CD4-positive, alpha-beta memory T cell (primary cell): ENCODE measurements at regions of chr10 and their contacts with region 1.

Region 1: GRCh38 chr10:133329491-133330202 is 7.0 kb downstream of the CALY start:
- DNase-seq: peak; percentile 77 to 84 (median 81)
- H3K4me3 ChIP-seq: no peak overlapping the region
- H3K4me3 Mint-ChIP-seq: peak overlapping the region in 5 of 8 donors; percentile 21 to 63 (median 32)
- H3K27ac ChIP-seq: no peak overlapping the region
- H3K27ac Mint-ChIP-seq: peak overlapping the region in 2 of 7 donors; percentile 35 to 79
- H3K4me1 ChIP-seq: peaks cover 24% of the 10 kb centered on the region
- H3K4me1 Mint-ChIP-seq: peaks cover 3 to 31% (median 12%) of the 10 kb centered on the region in 4 donors
- H3K27me3 ChIP-seq: peaks cover 31% of the 10 kb centered on the region
- H3K27me3 Mint-ChIP-seq: peaks cover 13 to 18% of the 10 kb centered on the region in 2 donors

Region 2: DNA sequence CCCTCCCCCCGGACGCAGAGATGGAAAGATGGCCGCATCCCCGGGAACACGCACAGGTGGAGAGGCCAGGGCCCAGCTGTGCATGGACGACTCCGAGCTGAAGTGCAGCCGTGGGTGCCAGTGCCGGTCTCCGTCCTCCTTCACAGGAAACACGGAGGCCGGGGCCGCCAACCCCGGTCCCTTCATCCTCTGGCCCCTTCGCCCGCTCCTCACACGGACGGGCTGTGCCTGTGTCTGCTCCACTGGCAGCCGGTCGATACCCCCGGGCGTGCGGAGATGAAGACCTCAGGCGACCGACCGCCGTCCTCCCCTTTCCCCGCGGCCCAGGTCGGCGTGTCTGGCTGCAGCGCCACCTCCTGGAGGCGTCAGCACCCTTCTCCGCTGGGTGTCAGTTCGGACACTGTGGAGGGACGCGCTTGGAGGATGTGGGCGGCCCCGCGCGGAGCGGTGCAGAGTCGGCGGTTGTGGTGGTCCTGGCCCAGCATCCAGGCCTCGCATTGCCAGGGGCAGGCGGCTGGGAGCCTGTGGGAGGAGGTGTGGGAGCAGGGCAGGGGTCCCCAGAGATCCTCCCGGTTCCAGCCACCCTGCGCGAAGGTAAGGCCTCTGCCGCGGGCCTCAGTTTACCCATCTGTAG is 11.0 kb before region 1 on chr10:
- CTCF ChIA-PET with region 1: interaction called, 19 read pairs
- POLR2A ChIA-PET with region 1: interaction called, 6 read pairs
- intact Hi-C with region 1: no loop called
- DNase-seq: peak; percentile 58 to 70 (median 61)
- H3K4me3 ChIP-seq: peak overlapping the region in 1 of 2 donors; percentile 32
- H3K4me3 Mint-ChIP-seq: peak overlapping the region; percentile 27 to 80 (median 70)
- H3K27ac ChIP-seq: no peak overlapping the region
- H3K27ac Mint-ChIP-seq: peak overlapping the region in 2 of 7 donors; percentile 36 to 77
- H3K4me1 ChIP-seq: peaks cover 9% of the 10 kb centered on the region
- H3K4me1 Mint-ChIP-seq: peaks cover 7 to 14% (median 13%) of the 10 kb centered on the region in 4 donors
- H3K27me3 ChIP-seq: no peaks in the 10 kb centered on the region
- H3K27me3 Mint-ChIP-seq: peaks cover 0 to 6% of the 10 kb centered on the region in 2 donors

Region 3: GRCh38 chr10:133394064-133394663 is 64.5 kb after region 1 on chr10 and contains the start of gene MTG1:
- CTCF ChIA-PET with region 1: interaction called, 26 read pairs
- POLR2A ChIA-PET with region 1: interaction called, 25 read pairs
- intact Hi-C with region 1: loop called (anchors 1 kb)
- DNase-seq: peak; percentile 85 to 93 (median 89)
- H3K4me3 ChIP-seq: peak within 1 kb of the TSS; percentile 69 to 89
- H3K4me3 Mint-ChIP-seq: peak within 1 kb of the TSS; percentile 88 to 95 (median 90)
- H3K27ac ChIP-seq: peak within 1 kb of the TSS; percentile 78
- H3K27ac Mint-ChIP-seq: peak within 1 kb of the TSS; percentile 83 to 94 (median 88)
- H3K4me1 ChIP-seq: peaks cover 60% of the 10 kb centered on the region
- H3K4me1 Mint-ChIP-seq: peaks cover 28 to 65% (median 44%) of the 10 kb centered on the region in 4 donors
- H3K27me3 ChIP-seq: no peaks in the 10 kb centered on the region
- H3K27me3 Mint-ChIP-seq: no peaks in the 10 kb centered on the region
- total RNA-seq, gene MTG1: 64.8 to 65.4 TPM

Region 4: DNA sequence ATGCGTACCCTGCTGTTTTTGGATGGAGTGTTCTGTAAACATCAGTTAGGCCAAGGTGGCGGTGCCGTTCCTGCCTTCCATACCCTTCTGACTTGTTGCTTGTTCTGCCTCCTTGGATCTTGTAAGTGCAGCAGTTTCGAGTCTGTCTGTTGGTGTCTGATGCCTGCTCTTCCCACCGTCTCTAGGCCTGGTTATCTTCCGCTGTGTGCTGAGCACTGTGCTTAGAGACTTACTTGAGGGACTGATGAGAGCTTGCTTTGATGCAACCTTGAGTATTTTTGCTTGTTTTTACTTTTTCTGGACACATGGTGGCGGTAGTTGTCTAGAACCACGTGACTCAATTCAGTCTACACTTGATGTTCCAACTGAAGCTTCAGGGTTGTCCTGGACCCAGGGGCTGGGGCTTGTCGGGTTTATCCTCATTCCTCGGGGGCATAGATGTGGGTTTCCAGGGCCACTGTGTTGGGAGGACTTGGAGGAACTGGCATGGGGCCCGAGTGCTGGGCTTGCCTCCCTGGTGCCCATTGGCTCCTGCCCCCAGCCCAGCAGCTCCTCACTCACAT is 109.1 kb after region 1 on chr10:
- CTCF ChIA-PET with region 1: interaction called, 22 read pairs
- POLR2A ChIA-PET with region 1: no interaction called
- intact Hi-C with region 1: no loop called
- DNase-seq: peak in 4 of 5 donors; percentile 31 to 42 (median 39)
- H3K4me3 ChIP-seq: no peak overlapping the region
- H3K4me3 Mint-ChIP-seq: peak overlapping the region in 4 of 8 donors; percentile 5 to 32 (median 13)
- H3K27ac ChIP-seq: no peak overlapping the region
- H3K27ac Mint-ChIP-seq: peak overlapping the region in 3 of 7 donors; percentile 30 to 49 (median 45)
- H3K4me1 ChIP-seq: peaks cover 41% of the 10 kb centered on the region
- H3K4me1 Mint-ChIP-seq: peaks cover 16 to 46% (median 36%) of the 10 kb centered on the region in 4 donors
- H3K27me3 ChIP-seq: no peaks in the 10 kb centered on the region
- H3K27me3 Mint-ChIP-seq: peaks cover 4 to 7% of the 10 kb centered on the region in 2 donors

Region 5: GRCh38 chr10:133608855-133609254 is 279.2 kb after region 1 on chr10:
- CTCF ChIA-PET with region 1: interaction called, 18 read pairs
- POLR2A ChIA-PET with region 1: no interaction called
- intact Hi-C with region 1: loop called (anchors 1 kb)
- DNase-seq: peak in 4 of 5 donors; percentile 4 to 41 (median 26)
- H3K4me3 ChIP-seq: no peak overlapping the region
- H3K4me3 Mint-ChIP-seq: no peak overlapping the region
- H3K27ac ChIP-seq: no peak overlapping the region
- H3K27ac Mint-ChIP-seq: no peak overlapping the region
- H3K4me1 ChIP-seq: no peaks in the 10 kb centered on the region
- H3K4me1 Mint-ChIP-seq: peaks cover 0 to 4% (median 0%) of the 10 kb centered on the region in 4 donors
- H3K27me3 ChIP-seq: peaks cover 5% of the 10 kb centered on the region
- H3K27me3 Mint-ChIP-seq: peaks cover 23 to 34% of the 10 kb centered on the region in 2 donors